Activated T-helper 1 cell treated with anti-CD3 and anti-CD28 coated beads, Interleukin-12 subunit alpha, Interleukin-12 subunit beta, Interleukin-2, Interleukin-4 antibody, amounts not matched to agents 30 ng/mL and 10 ng/mL and 1 ng/mL, durations not matched to agents 14 hours and 24 hours and 36 hours (primary cell): ENCODE measurements at regions of chr6 and their contacts with region 1.

Region 1: GRCh38 chr6:100479179-100480035 is 14.7 kb upstream of the SIM1 start:
- DNase-seq: no peak
- H3K4me3 Mint-ChIP-seq: no peak overlapping the region
- H3K27ac Mint-ChIP-seq: no peak overlapping the region
- H3K4me1 Mint-ChIP-seq: no peaks in the 10 kb centered on the region
- H3K27me3 Mint-ChIP-seq: peaks cover 14% of the 10 kb centered on the region

Region 2: DNA sequence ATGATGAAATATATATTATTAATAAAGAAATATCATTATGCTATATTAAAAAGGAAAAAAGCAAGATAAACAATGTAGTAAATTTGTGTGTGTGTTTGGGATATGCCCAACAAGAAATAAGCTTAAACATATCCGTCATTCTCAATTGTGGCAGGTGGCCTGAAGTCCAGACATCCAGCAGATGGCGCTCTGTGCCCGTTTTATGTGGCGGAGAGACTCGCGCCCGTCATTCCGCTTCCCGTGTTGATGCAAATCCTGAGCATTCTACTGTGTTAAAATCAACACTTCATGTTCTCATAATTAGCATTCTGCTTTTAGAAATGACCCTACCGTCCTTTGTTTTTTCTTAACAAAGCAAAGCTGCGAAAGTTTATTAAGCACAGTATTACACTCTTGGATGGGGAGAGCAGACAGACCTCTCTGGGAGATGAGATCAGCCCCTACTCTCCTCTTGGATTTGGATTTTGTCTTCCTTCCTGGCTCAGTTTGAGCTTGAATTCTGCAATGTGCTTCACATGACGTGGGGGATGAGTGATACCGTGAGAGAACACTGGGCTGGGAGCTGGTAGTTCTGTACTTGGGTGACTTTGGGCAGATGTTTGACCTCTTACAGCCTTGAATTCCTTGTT is 611.2 kb before region 1 on chr6:
- intact Hi-C with region 1: loop called (anchors 1 kb)
- DNase-seq: peak; percentile 51
- H3K4me3 Mint-ChIP-seq: no peak overlapping the region
- H3K27ac Mint-ChIP-seq: no peak overlapping the region
- H3K4me1 Mint-ChIP-seq: peaks cover 5% of the 10 kb centered on the region
- H3K27me3 Mint-ChIP-seq: peaks cover 24% of the 10 kb centered on the region

Region 3: DNA sequence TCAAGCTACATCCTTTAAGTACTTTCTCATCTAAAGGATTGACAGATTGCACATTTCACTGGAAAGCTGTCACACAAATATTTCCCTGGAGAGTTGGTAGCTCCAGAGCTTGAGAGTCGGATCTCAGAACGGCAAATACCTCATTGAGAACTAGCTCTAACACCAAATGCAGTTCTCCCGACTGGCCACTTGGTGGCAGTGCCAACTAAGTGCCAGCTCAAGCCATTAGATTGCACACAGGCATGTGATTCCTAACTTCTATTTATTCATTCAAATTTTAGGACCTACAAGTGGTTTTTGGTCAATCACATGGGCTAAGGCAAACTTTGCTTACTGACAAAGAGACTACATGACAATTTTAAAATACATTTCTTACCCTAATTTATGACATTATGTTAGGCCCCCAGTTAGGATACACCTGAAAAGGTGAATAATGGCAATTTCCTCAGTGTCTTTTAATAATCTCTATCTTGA is 477.5 kb before region 1 on chr6:
- intact Hi-C with region 1: loop called (anchors 1 kb)
- DNase-seq: no peak
- H3K4me3 Mint-ChIP-seq: no peak overlapping the region
- H3K27ac Mint-ChIP-seq: no peak overlapping the region
- H3K4me1 Mint-ChIP-seq: no peaks in the 10 kb centered on the region
- H3K27me3 Mint-ChIP-seq: peaks cover 13% of the 10 kb centered on the region

Region 4: GRCh38 chr6:100116411-100117194 is 362.8 kb before region 1 on chr6:
- intact Hi-C with region 1: loop called (anchors 1 kb)
- DNase-seq: peak; percentile 8
- H3K4me3 Mint-ChIP-seq: no peak overlapping the region
- H3K27ac Mint-ChIP-seq: no peak overlapping the region
- H3K4me1 Mint-ChIP-seq: no peaks in the 10 kb centered on the region
- H3K27me3 Mint-ChIP-seq: peaks cover 6% of the 10 kb centered on the region

Region 5: DNA sequence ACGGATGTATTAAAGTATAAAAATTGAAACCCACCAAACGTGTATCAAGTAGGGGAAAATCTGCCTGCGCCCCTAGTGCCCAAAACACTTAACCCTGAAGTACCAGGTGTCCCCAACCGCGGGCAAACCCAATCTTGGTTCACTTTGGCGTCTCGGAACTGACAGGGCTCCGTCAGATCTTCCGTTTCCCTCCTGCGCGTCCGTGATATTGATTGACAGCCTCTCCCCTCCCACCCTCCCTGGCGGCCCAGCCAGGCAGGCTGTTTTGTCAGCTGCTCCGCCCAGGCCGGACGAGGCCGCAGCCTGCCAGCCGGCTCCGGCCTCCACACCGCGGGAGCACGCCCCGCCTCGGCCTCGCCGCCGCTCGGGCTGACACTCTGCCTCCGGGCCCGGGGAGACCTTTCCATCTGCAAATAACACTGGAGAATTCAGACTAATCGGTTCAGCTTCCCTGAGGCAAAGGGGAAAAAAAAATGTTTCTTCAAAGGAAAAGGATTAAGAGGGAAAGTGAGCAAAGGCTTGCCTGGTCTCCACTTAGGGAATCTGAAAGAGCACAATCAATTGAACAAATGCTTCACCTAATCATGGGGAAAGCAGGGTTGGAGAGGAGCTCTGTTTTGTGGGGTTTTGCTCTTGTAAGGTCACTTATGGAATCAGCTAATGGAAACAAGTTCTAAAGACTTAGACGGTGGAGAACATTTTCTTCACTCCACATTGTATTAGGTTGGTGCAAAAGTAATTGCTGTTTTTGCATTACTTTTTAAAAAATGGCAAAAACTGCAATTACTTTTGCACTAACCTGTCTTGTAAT is 250.4 kb before region 1 on chr6:
- intact Hi-C with region 1: loop called (anchors 10 kb)
- DNase-seq: peak; percentile 38
- H3K4me3 Mint-ChIP-seq: peak overlapping the region; percentile 66
- H3K27ac Mint-ChIP-seq: peak overlapping the region; percentile 71
- H3K4me1 Mint-ChIP-seq: peaks cover 23% of the 10 kb centered on the region
- H3K27me3 Mint-ChIP-seq: peaks cover 6% of the 10 kb centered on the region

Region 6: GRCh38 chr6:100455230-100456124 is 23.9 kb before region 1 on chr6:
- intact Hi-C with region 1: no loop called
- DNase-seq: no peak
- H3K4me3 Mint-ChIP-seq: no peak overlapping the region
- H3K27ac Mint-ChIP-seq: peak overlapping the region; percentile 63
- H3K4me1 Mint-ChIP-seq: peaks cover 10% of the 10 kb centered on the region
- H3K27me3 Mint-ChIP-seq: peaks cover 65% of the 10 kb centered on the region

Region 7: DNA sequence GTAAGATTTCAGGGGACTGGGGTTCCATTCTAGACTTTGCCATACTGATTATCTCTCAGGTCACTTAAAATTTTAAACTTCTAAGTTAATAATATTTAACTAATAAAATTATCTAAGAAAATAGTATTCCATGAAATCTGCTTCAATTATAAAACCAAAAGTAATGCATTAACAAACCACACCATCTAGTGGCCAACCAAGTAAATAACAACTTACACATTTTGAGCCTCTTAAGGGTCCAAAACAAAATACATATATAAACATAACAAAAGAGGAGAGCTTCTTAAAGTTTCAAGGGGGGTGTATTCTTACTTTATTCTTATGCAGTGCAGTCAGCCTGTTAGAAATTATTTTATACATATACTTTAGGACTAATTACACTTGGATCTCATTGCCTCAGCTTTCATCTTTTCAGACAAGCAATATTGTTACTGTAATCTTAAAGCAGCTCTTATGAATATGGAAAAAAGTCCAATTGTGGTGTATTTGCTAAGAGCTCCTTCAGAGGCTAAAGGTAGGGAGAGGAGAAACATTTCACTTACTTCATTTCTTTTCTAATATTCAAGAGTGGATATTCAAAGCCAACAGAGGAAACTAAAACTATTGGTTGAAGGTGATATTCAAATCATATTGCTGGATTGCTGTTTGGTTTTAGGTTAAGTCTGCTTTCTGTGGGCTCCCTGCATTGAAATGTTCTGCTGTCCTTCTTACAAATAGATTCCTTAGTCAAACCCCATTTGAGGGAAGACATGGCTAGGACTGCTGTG is 185.1 kb after region 1 on chr6:
- intact Hi-C with region 1: loop called (anchors 2 kb)
- DNase-seq: no peak
- H3K4me3 Mint-ChIP-seq: no peak overlapping the region
- H3K27ac Mint-ChIP-seq: peak overlapping the region; percentile 32
- H3K4me1 Mint-ChIP-seq: peaks cover 10% of the 10 kb centered on the region
- H3K27me3 Mint-ChIP-seq: no peaks in the 10 kb centered on the region

Region 8: GRCh38 chr6:100880853-100881706 is 401.7 kb after region 1 on chr6 and contains the start of gene ASCC3:
- intact Hi-C with region 1: loop called (anchors 10 kb)
- DNase-seq: peak; percentile 89
- H3K4me3 Mint-ChIP-seq: peak within 1 kb of the TSS; percentile 100
- H3K27ac Mint-ChIP-seq: peak within 1 kb of the TSS; percentile 100
- H3K4me1 Mint-ChIP-seq: peaks cover 47% of the 10 kb centered on the region
- H3K27me3 Mint-ChIP-seq: peaks cover 3% of the 10 kb centered on the region
- total RNA-seq, gene ASCC3: 70.1 and 70.8 TPM in 2 replicates